ENCODE measurements at regions of chr5 and their contacts with region 1.

Region 1: GRCh38 chr5:14650052-14650451 is 14.5 kb upstream of the OTULIN start:
- DNase-seq: no peak
- ATAC-seq: no peak
- H3K4me3 ChIP-seq: no peak overlapping the region
- H3K4me3 Mint-ChIP-seq: no peak overlapping the region
- H3K27ac ChIP-seq: no peak overlapping the region
- H3K27ac Mint-ChIP-seq: no peak overlapping the region
- H3K4me1 ChIP-seq: no peaks in the 10 kb centered on the region
- H3K4me1 Mint-ChIP-seq: peaks cover 2% of the 10 kb centered on the region
- H3K27me3 ChIP-seq: peaks cover 0 to 5% of the 10 kb centered on the region in 2 experiments
- H3K27me3 Mint-ChIP-seq: peaks cover 17% of the 10 kb centered on the region
- CTCF ChIP-seq: no peak

Region 2: DNA sequence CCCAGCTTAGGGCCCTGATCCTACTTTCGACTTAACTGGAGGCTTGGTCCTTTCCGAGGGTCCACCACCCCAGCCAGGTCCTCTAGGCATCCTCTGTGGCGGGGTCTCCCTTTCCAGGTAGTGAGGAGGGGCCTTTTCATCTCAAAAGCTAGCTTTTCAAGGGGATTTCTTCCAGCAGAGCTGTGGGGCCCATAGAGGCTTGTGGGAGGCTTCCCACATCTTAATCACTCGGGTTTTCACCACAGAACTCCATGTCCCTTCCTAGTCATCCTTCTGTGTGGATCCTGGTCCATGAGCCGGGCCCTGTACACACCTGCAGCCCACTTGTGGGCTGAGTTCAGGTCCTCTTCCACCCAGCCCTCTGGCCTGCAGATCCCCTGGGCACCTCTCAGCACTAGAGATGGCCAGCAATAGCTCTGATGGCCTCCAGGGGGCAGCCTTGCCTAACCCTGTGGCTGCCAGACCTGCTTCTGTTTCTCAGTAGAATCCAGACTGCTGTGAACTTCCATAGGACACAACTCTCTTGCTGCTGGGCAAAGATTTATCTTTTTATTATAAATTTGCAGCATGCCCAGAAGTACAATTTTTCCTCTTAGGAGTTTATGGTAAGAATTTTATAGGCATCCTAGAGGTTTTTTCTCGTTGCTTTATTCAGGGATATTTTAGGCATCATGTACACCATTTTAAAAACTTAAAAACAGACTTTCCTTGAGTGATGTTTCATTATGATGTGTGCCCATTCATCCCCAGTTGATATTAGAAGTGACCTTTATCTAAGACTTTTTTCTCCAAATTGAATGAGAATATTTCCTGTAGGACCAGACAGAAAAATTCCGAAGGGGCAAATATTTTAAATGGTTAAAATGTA is 298.0 kb before region 1 on chr5:
- CTCF ChIA-PET with region 1: interaction called, 21 read pairs
- POLR2A ChIA-PET with region 1: interaction called, 8 read pairs
- intact Hi-C with region 1: loop called (anchors 1 kb)
- DNase-seq: peak; percentile 24 to 80 (median 46)
- ATAC-seq: peak; percentile 89
- H3K4me3 ChIP-seq: no peak overlapping the region
- H3K4me3 Mint-ChIP-seq: no peak overlapping the region
- H3K27ac ChIP-seq: no peak overlapping the region
- H3K27ac Mint-ChIP-seq: no peak overlapping the region
- H3K4me1 ChIP-seq: peaks cover 5% of the 10 kb centered on the region
- H3K4me1 Mint-ChIP-seq: no peaks in the 10 kb centered on the region
- H3K27me3 ChIP-seq: no peaks in the 10 kb centered on the region
- H3K27me3 Mint-ChIP-seq: no peaks in the 10 kb centered on the region
- CTCF ChIP-seq: peak; percentile 91

Region 3: DNA sequence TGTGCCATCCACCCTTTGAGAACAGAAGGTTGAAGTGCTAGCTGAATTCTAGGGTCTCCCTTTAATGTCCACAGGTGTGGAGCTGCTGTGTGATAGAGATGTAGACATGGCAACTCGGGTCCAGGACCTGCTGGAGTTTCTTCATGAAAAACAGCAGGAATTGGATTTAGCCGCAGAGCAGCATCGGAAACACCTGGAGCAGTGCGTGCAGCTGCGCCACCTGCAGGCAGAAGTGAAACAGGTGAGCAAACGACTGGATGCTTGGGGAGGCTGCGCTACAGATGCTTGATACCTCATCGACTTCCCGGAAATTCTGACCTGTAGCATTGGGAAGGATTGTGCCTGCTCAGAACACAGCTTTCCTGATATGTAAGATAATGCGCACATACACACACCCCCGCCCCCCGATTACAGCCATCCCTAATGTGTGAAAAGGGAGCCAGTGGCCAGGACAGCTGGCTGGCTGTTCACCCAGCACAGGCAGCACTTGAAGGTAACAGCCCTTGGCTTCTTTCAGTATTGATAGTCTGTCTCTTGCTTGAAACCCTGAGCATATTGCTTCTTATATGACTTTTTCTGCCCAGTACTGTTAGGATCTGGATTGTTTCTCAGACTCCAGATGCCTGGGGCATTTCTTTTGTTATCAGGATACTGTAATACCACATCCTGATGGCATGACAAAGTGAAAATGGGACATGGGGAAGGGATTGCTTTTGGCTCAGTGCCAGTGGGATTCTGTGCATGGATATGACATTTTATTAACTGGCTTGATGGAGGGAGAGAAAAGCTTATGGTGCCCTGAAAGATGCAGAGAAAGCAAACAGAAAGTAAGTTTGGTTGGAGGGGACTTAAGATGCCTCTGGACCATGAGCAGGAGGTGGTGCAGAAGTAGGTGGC is 285.2 kb before region 1 on chr5:
- CTCF ChIA-PET with region 1: interaction called, 55 read pairs
- POLR2A ChIA-PET with region 1: interaction called, 4 read pairs
- intact Hi-C with region 1: loop called (anchors 1 kb)
- DNase-seq: peak in 6 of 14 experiments; percentile 5 to 31 (median 14)
- ATAC-seq: no peak
- H3K4me3 ChIP-seq: no peak overlapping the region
- H3K4me3 Mint-ChIP-seq: no peak overlapping the region
- H3K27ac ChIP-seq: no peak overlapping the region
- H3K27ac Mint-ChIP-seq: no peak overlapping the region
- H3K4me1 ChIP-seq: peaks cover 17% of the 10 kb centered on the region
- H3K4me1 Mint-ChIP-seq: peaks cover 36% of the 10 kb centered on the region
- H3K27me3 ChIP-seq: peaks cover 0 to 4% of the 10 kb centered on the region in 2 experiments
- H3K27me3 Mint-ChIP-seq: no peaks in the 10 kb centered on the region
- CTCF ChIP-seq: no peak

Region 4: GRCh38 chr5:15472116-15472515 is 822.1 kb after region 1 on chr5:
- CTCF ChIA-PET with region 1: no interaction called
- POLR2A ChIA-PET with region 1: no interaction called
- intact Hi-C with region 1: no loop called
- DNase-seq: no peak
- ATAC-seq: no peak
- H3K4me3 ChIP-seq: no peak overlapping the region
- H3K4me3 Mint-ChIP-seq: no peak overlapping the region
- H3K27ac ChIP-seq: no peak overlapping the region
- H3K27ac Mint-ChIP-seq: no peak overlapping the region
- H3K4me1 ChIP-seq: no peaks in the 10 kb centered on the region
- H3K4me1 Mint-ChIP-seq: no peaks in the 10 kb centered on the region
- H3K27me3 ChIP-seq: no peaks in the 10 kb centered on the region
- H3K27me3 Mint-ChIP-seq: no peaks in the 10 kb centered on the region
- CTCF ChIP-seq: no peak

Measured in CD4-positive, alpha-beta T cell (primary cell).